Endothelial cell of umbilical vein (primary cell): ENCODE measurements at regions of chr9 and their contacts with region 1.

Region 1: DNA sequence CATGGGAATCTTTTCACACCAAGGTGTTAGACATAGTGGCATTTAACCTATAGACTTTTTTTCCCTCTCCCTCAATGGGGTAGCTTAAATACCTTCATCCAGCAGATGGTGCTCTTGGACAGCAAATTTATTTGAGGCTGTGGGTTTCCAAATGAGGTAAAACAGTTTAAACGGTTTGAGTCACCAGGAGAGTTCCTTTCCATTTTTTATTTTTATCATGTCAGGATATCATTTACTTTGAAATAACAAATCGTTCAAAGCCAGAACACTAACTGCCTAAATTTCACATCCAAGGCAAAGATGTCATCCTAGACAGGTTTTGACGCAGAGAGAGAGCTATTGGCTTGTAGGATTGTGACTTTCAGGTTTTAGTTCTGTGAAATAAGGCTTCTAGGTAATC is 69.7 kb downstream of the KDM4C start:
- DNase-seq: peak; percentile 69
- H3K4me3 ChIP-seq: no peak overlapping the region
- H3K27ac ChIP-seq: no peak overlapping the region
- H3K4me1 ChIP-seq: no peaks in the 10 kb centered on the region
- H3K27me3 ChIP-seq: no peaks in the 10 kb centered on the region
- CTCF ChIP-seq: peak; percentile 52
- POLR2A ChIP-seq: no peak

Region 2: DNA sequence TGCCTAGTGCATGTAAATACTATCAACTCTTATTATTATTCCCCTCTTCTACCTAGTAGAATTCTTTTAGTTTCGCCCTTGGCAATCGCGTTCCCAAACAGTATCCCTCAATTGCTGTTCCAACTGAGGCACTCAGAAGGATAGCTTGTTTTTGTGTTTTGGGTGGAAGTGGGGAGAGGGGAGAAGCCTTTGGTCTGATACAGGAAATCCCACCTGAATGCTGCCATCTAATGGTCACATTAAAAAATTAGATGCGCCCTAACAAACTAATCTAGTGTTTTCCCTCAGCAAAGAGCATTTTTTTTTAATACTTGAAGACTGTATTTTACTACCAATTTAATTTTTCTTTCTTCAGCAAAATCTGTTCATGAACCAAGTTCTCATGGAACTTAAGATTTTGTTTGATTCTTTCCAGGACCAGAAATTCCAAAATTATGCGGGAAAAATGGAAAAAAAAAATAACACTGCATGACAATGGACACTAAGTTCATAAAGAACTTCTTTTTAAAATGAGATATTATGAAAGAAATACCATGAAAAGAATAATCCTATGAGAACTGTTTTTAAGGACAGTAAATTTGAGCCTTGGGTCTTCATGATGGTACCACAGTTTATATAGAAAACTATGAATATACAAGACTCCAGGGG is 159.7 kb before region 1 on chr9:
- CTCF ChIA-PET with region 1: no interaction called
- POLR2A ChIA-PET with region 1: no interaction called
- dilution Hi-C with region 1: no loop called
- intact Hi-C with region 1: no loop called
- DNase-seq: peak; percentile 46
- H3K4me3 ChIP-seq: no peak overlapping the region
- H3K27ac ChIP-seq: no peak overlapping the region
- H3K4me1 ChIP-seq: peaks cover 3% of the 10 kb centered on the region
- H3K27me3 ChIP-seq: no peaks in the 10 kb centered on the region
- CTCF ChIP-seq: peak; percentile 28 to 45
- POLR2A ChIP-seq: no peak

Region 3: DNA sequence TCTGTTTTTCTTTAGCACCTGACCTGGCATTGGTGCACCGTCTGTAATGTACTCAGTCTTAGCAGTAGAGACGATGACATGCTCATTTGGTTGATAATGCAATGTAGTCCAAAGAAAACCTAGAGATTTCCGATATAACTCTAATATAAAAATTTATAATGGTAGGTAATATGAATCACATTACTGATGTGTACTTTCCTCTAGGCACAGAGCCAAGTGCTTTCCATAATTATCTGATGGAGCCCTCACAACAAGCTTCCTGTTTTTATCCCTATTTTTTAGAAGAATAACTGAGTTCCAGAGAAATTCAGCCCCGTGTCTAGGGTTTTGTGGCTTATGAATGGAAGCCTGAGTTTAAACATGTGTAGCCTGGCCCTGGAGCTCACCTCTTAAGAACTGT is 16.0 kb before region 1 on chr9:
- CTCF ChIA-PET with region 1: interaction called, 28 read pairs
- POLR2A ChIA-PET with region 1: no interaction called
- dilution Hi-C with region 1: no loop called
- intact Hi-C with region 1: no loop called
- DNase-seq: peak; percentile 87
- H3K4me3 ChIP-seq: no peak overlapping the region
- H3K27ac ChIP-seq: peak overlapping the region; percentile 24
- H3K4me1 ChIP-seq: peaks cover 14% of the 10 kb centered on the region
- H3K27me3 ChIP-seq: no peaks in the 10 kb centered on the region
- CTCF ChIP-seq: no peak
- POLR2A ChIP-seq: no peak

Region 4: DNA sequence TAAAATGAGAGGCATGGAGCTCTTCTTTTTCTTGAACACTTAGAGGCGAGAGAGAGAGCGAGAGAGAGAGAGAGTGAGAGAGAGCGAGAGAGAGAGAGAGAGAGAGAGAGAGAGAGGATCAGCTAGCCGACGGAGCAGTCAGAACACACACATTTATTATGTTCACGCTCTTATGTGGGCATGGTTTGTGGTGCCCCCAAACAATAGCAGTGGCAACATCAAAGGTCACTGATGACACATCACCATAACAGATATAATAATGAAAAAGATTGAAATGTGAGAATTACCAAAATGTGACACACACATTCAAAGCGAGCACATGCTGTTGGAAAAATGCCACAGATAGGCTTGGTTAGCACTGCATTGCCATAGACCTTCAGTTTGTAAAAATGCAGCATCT is 46.4 kb after region 1 on chr9:
- CTCF ChIA-PET with region 1: interaction called, 13 read pairs
- POLR2A ChIA-PET with region 1: no interaction called
- dilution Hi-C with region 1: no loop called
- intact Hi-C with region 1: no loop called
- DNase-seq: peak; percentile 79
- H3K4me3 ChIP-seq: peak overlapping the region in 1 of 3 experiments; percentile 38
- H3K27ac ChIP-seq: no peak overlapping the region
- H3K4me1 ChIP-seq: peaks cover 4% of the 10 kb centered on the region
- H3K27me3 ChIP-seq: no peaks in the 10 kb centered on the region
- CTCF ChIP-seq: no peak
- POLR2A ChIP-seq: no peak

Region 5: DNA sequence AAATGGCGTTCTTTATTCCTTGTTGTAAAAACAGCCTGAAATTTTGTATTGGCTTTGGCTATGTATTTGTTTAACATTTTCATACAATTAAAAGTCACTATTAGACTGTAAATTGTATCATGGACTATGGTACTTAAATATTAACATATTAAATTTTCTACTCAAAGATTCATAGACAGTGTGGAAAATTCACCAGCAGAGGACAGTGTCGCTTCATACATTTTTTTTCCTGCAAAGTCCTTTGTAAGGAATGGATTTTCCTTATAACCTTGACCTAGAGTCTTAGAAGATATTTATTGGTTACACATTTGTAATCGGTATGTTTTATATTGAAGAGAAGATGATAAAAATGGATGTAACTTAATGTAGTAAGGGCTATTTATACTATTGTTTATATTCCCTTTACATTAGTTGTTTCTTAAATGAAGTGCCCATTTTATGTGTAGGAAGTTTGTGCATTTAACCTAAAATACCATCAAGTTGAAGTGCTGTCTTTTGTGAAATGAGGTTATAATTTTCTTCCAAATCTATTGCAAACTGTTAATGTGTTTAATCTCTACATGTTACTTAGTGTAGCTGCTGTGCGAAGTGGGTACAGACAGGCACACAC is 80.4 kb after region 1 on chr9:
- CTCF ChIA-PET with region 1: interaction called, 28 read pairs
- POLR2A ChIA-PET with region 1: no interaction called
- dilution Hi-C with region 1: no loop called
- intact Hi-C with region 1: loop called (anchors 2 kb)
- DNase-seq: peak; percentile 64
- H3K4me3 ChIP-seq: no peak overlapping the region
- H3K27ac ChIP-seq: no peak overlapping the region
- H3K4me1 ChIP-seq: peaks cover 2% of the 10 kb centered on the region
- H3K27me3 ChIP-seq: no peaks in the 10 kb centered on the region
- CTCF ChIP-seq: peak; percentile 41 to 52
- POLR2A ChIP-seq: no peak

Region 6: GRCh38 chr9:7186175-7186574 is 358.7 kb after region 1 on chr9:
- CTCF ChIA-PET with region 1: interaction called, 41 read pairs
- POLR2A ChIA-PET with region 1: no interaction called
- dilution Hi-C with region 1: no loop called
- intact Hi-C with region 1: loop called (anchors 1 kb)
- DNase-seq: peak; percentile 22
- H3K4me3 ChIP-seq: no peak overlapping the region
- H3K27ac ChIP-seq: no peak overlapping the region
- H3K4me1 ChIP-seq: peaks cover 8% of the 10 kb centered on the region
- H3K27me3 ChIP-seq: peaks cover 0 to 3% of the 10 kb centered on the region in 2 experiments
- CTCF ChIP-seq: peak; percentile 54 to 66
- POLR2A ChIP-seq: no peak

Region 7: DNA sequence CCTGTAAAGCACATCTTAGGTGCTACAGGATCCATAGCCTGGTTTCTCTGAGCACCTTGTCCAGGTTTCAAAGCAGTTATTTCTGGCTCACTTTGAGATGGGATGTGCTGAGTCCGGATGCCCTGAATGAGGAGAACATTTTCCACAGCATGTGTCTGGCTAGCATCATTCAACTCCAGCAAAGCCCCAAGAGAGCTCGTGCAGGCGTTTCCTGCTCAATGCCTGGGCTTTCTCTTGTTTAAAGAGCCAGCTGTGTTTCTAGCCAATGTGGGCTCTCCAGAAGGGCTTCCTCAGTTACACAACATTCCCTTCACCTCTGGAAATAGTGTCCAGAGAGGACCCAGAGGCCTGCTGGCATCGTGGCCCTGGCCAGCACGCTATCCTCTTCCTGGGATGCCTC is 560.4 kb after region 1 on chr9:
- CTCF ChIA-PET with region 1: no interaction called
- POLR2A ChIA-PET with region 1: no interaction called
- dilution Hi-C with region 1: no loop called
- intact Hi-C with region 1: no loop called
- DNase-seq: no peak
- H3K4me3 ChIP-seq: no peak overlapping the region
- H3K27ac ChIP-seq: no peak overlapping the region
- H3K4me1 ChIP-seq: no peaks in the 10 kb centered on the region
- H3K27me3 ChIP-seq: no peaks in the 10 kb centered on the region
- CTCF ChIP-seq: no peak
- POLR2A ChIP-seq: no peak

Region 8: GRCh38 chr9:7536310-7536939 is 709.0 kb after region 1 on chr9:
- CTCF ChIA-PET with region 1: interaction called, 22 read pairs
- POLR2A ChIA-PET with region 1: no interaction called
- dilution Hi-C with region 1: no loop called
- intact Hi-C with region 1: loop called (anchors 1 kb)
- DNase-seq: peak; percentile 42
- H3K4me3 ChIP-seq: no peak overlapping the region
- H3K27ac ChIP-seq: no peak overlapping the region
- H3K4me1 ChIP-seq: no peaks in the 10 kb centered on the region
- H3K27me3 ChIP-seq: no peaks in the 10 kb centered on the region
- CTCF ChIP-seq: peak; percentile 50 to 69
- POLR2A ChIP-seq: no peak